ENCODE measurements at regions of chr19 and their contacts with region 1.

Region 1: DNA sequence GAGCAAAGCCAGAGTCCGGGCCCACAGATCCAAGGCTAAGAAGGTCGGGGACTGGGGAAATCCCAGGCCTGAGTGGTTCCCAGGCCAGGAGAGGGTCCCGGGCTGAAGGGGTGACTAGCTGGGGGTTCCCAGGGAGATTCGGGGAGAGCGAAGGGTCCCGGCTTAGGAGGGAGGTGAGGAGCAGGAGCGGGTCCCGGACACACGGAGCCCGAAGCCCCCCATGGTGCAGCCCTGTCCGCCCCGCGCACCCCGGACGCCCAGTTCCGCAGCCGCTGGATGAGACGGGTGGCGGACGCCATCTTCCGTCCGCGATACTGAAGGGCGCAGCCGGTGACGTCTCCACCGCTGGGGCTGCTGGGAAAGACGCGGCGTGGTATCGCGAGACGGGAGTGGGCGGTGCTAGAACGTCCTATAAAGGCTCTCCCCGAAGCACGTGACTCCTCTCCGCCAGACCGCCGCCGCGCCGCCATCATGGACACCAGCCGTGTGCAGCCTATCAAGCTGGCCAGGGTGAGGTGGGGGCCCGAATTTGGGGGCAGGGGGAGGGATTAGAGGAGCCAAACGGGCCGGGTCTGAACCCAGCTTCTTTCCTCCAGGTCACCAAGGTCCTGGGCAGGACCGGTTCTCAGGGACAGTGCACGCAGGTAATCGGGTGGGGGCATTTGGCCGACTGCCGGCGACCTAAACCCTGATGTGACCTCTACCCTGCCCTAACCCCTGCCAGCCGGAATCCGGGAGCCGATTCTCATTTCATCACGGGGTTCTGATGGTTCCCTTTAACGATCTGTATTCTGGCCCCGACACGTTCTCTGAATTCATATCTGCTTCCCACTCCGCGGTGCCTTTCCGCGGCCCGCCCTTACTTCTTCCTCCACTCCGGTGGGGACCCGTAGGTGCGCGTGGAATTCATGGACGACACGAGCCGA is at the starts of genes NDUFA7 and RPS28:
- DNase-seq: peak; percentile 98
- H3K4me3 ChIP-seq: peak within 1 kb of the TSS; percentile 97
- H3K27ac ChIP-seq: peak within 1 kb of the TSS; percentile 88
- H3K4me1 ChIP-seq: no peaks in the 10 kb centered on the region
- H3K27me3 ChIP-seq: no peaks in the 10 kb centered on the region
- CTCF ChIP-seq: no peak
- total RNA-seq, gene NDUFA7: 57.4 to 58.3 TPM
- total RNA-seq, gene RPS28: 1,587 to 1,854 TPM

Region 2: DNA sequence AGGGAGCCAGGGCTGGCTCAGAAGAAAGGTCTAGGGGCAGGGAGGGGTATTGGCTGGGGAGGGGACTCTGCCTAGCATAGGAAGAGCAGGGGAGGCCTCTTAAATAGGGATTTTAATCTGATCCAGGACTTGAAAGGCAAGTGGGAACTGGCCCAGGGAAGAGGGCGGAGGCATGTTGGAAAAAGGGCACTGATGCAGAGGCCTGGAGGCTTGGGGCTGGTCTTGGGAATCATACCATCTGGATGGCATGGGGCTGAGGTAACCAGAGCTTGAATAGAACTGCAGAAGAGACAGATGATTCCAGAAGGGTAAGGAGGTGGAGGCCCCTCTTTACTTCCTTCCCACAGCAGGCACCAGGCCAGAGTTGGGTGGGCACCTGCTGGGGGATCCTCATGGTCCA is 83.1 kb before region 1 on chr19:
- intact Hi-C with region 1: no loop called
- DNase-seq: no peak
- H3K4me3 ChIP-seq: no peak overlapping the region
- H3K27ac ChIP-seq: no peak overlapping the region
- H3K4me1 ChIP-seq: no peaks in the 10 kb centered on the region
- H3K27me3 ChIP-seq: no peaks in the 10 kb centered on the region
- CTCF ChIP-seq: no peak

Region 3: DNA sequence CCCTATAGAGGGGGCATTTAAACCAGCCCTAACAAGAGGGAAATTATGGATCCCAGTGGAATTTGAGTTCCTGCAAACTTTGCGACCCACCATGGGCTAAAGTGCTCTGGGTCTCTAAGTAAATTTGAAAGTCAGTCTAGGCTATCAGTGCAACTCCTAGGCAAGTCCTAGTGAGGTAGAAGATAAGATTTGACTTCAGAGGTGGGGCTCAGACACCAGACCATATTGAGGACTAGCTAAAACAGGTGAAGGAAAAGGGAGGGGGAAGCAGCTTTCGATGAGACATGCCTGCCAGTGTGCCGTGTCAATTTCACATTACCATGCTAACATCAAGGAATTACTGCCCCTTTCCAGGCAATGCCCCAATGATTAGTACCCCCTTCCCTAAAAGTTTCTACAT is 51.6 kb before region 1 on chr19:
- intact Hi-C with region 1: loop called (anchors 5 kb)
- DNase-seq: no peak
- H3K4me3 ChIP-seq: no peak overlapping the region
- H3K27ac ChIP-seq: no peak overlapping the region
- H3K4me1 ChIP-seq: no peaks in the 10 kb centered on the region
- H3K27me3 ChIP-seq: no peaks in the 10 kb centered on the region
- CTCF ChIP-seq: no peak

Measured in colonic mucosa (tissue), 4 donors.